Posterior vena cava (tissue), 2 donors: ENCODE measurements at regions of chr7 and their contacts with region 1.

Region 1: DNA sequence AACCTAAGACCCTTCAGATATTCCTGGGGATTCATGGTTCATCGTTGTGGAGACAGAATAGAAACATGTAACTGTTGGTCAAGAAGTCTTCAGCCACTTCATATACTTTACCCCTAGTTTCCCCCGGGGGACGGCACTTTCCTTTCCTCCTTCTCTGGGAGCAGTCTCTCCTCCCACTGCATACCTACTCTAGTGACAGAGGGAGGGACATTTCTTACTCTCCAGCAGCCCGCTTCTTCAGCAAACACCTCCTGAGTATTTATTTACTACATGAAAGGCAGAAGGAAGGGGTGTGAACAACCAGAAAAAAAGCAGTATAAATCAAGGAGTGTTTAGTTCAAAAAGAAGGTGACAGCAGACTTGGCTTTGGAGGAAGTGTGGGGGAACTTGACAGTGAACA is 69.0 kb downstream of the LHFPL3 start:
- DNase-seq: no peak

Region 2: GRCh38 chr7:103447073-103447951 is 950.1 kb before region 1 on chr7:
- intact Hi-C with region 1: loop called in 1 of 2 experiments (anchors 10 kb)
- DNase-seq: no peak